ENCODE measurements at regions of chr2 and their contacts with region 1.

Region 1: DNA sequence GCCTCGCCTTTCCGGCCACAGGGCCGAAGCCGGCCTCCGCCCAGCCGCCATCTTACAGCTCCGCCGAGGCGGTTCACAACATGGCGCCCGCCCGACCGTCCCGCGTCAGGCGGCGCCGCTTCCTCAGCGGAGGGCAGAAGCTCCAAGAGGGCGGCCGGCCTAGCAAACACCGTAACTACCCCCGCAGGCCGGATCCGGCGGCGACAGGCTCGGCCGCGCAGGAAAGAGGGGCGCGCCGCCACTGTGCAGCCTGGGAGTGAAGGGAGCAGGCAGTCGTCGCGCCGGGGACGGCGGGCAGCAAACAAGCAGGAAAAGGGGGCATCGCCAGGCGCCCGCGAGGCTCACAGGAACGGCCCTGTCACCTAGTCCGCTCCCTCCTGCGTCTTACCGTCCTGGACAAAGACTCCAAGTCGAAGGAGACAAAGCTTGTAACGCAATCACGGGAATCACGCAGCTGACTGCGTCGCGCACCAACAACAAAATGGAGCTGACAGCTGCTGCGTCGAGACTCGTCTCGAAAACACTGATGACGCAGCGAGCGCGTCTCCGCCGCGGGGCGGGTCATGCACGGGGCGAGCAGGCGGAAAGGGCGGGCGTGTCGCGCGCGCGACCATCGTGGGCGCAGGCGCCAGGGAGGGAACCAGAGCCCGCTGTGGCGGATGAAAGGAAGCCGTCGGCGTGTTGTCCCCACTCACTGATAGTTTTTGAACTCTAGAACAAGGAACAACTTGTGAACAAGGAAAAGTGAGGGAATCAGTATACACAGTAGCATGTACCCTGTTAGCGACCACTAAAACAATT is at the start of gene CLK1:
- DNase-seq: peak; percentile 89
- ATAC-seq: peak; percentile 80
- H3K4me3 ChIP-seq: peak within 1 kb of the TSS; percentile 91 to 99 (median 97)
- H3K27ac ChIP-seq: peak within 1 kb of the TSS; percentile 98
- H3K4me1 ChIP-seq: peaks cover 55% of the 10 kb centered on the region
- H3K27me3 ChIP-seq: no peaks in the 10 kb centered on the region; a peak in 1 of 5 replicates
- CTCF ChIP-seq: no peak; the same call in 1 of the 2 replicates
- EP300 ChIP-seq: peak; percentile 27 to 54; a peak in 2 of 4 replicates
- POLR2A ChIP-seq: peak; percentile 99 to 100
- RAD21 ChIP-seq: peak; percentile 54
- total RNA-seq, gene CLK1: 35.2 and 66.6 TPM in 2 replicates

Region 2: GRCh38 chr2:200635251-200635650 is 229.1 kb before region 1 on chr2:
- CTCF ChIA-PET with region 1: no interaction called
- POLR2A ChIA-PET with region 1: no interaction called
- in situ Hi-C with region 1: no loop called
- intact Hi-C with region 1: no loop called
- DNase-seq: no peak
- ATAC-seq: no peak
- H3K4me3 ChIP-seq: no peak overlapping the region
- H3K27ac ChIP-seq: no peak overlapping the region
- H3K4me1 ChIP-seq: no peaks in the 10 kb centered on the region
- H3K27me3 ChIP-seq: no peaks in the 10 kb centered on the region
- CTCF ChIP-seq: no peak
- EP300 ChIP-seq: no peak
- POLR2A ChIP-seq: no peak
- RAD21 ChIP-seq: no peak

Region 3: DNA sequence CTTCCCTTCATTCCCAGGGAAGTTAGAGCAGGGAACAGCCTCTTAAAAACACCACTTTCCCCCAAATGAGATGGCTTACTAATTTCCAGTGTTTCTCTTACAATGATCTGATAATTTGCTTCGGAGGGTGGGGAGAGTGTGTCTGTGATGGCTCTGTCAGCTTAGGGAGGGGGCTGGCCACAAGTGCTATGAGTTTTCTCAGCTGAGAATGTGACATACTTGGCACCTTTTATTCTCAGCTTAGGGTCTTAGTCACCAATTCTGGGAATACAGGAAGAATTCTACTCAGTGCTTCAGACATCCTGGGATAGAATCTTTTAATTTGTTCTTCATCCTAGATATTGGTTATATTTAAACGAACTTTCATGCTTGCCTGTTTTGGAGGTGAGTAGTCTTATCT is 214.2 kb before region 1 on chr2:
- CTCF ChIA-PET with region 1: no interaction called
- POLR2A ChIA-PET with region 1: interaction called, 10 read pairs
- in situ Hi-C with region 1: no loop called
- intact Hi-C with region 1: no loop called
- DNase-seq: no peak
- ATAC-seq: no peak
- H3K4me3 ChIP-seq: no peak overlapping the region
- H3K27ac ChIP-seq: no peak overlapping the region
- H3K4me1 ChIP-seq: peaks cover 30% of the 10 kb centered on the region
- H3K27me3 ChIP-seq: no peaks in the 10 kb centered on the region
- CTCF ChIP-seq: no peak
- EP300 ChIP-seq: no peak
- POLR2A ChIP-seq: no peak
- RAD21 ChIP-seq: no peak

Region 4: DNA sequence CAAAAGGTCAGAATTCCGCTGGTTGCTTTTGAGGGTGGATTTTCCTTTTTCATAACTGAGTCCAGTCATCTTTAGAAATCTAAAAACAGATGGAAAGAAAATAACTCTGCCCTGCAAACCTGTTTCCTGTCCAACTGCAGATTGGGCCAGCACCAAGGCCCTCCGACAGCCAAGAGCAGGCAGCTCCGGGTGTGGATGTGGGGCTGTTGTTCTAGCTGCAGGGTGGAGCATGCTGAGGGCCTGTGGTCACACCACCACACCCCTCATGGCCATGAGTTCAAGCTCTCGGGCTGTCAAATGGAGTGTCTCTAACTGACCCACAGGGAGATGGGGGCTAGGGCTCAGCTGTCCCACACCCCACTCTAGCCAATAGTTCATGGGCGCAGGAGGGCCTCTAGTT is 122.0 kb before region 1 on chr2:
- CTCF ChIA-PET with region 1: interaction called, 4 read pairs
- POLR2A ChIA-PET with region 1: interaction called, 19 read pairs
- in situ Hi-C with region 1: no loop called
- intact Hi-C with region 1: no loop called
- DNase-seq: no peak
- ATAC-seq: peak; percentile 6; the same call in 1 of the 3 replicates
- H3K4me3 ChIP-seq: no peak overlapping the region
- H3K27ac ChIP-seq: peak overlapping the region; percentile 69
- H3K4me1 ChIP-seq: peaks cover 49% of the 10 kb centered on the region
- H3K27me3 ChIP-seq: peaks cover 0 to 16% of the 10 kb centered on the region in 2 experiments; a peak in 2 of 5 replicates
- CTCF ChIP-seq: no peak
- EP300 ChIP-seq: no peak
- POLR2A ChIP-seq: no peak
- RAD21 ChIP-seq: no peak

Region 5: GRCh38 chr2:200756618-200757321 is 107.6 kb before region 1 on chr2:
- CTCF ChIA-PET with region 1: no interaction called
- POLR2A ChIA-PET with region 1: interaction called, 25 read pairs
- in situ Hi-C with region 1: no loop called
- intact Hi-C with region 1: loop called (anchors 1 kb)
- DNase-seq: peak; percentile 95
- ATAC-seq: peak; percentile 93
- H3K4me3 ChIP-seq: peak overlapping the region; percentile 5 to 59 (median 11); a peak in 5 of 6 replicates
- H3K27ac ChIP-seq: peak overlapping the region; percentile 64
- H3K4me1 ChIP-seq: peaks cover 79% of the 10 kb centered on the region
- H3K27me3 ChIP-seq: no peaks in the 10 kb centered on the region; a peak in 2 of 5 replicates
- CTCF ChIP-seq: no peak
- EP300 ChIP-seq: peak; percentile 33 to 91; a peak in 2 of 4 replicates
- POLR2A ChIP-seq: peak; percentile 37 to 50; a peak in 2 of 4 replicates
- RAD21 ChIP-seq: peak; percentile 22; the same call in 1 of the 2 replicates

Region 6: DNA sequence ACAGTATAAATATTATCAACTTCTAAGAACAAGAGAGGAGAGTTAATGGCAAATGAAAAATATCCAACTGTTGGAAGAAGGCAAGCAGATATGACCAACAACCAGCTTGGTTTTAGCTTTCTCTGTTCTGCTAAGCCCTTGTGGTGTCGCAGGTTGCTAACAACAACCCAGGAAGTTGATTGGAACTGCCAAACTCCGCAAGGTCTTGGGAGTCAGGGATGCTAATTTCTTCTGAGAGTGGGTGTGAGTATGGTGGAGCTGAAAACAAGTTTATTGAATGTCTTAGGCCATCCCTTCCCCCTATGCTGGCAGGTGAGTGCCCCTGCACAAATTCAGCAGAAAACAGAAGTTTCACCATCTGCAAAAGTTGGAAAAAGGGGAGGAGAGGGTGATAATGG is 35.1 kb before region 1 on chr2:
- CTCF ChIA-PET with region 1: no interaction called
- POLR2A ChIA-PET with region 1: interaction called, 14 read pairs
- in situ Hi-C with region 1: loop called (anchors 5 kb)
- intact Hi-C with region 1: loop called (anchors 5 kb)
- DNase-seq: no peak
- ATAC-seq: peak; percentile 8
- H3K4me3 ChIP-seq: no peak overlapping the region
- H3K27ac ChIP-seq: no peak overlapping the region
- H3K4me1 ChIP-seq: no peaks in the 10 kb centered on the region
- H3K27me3 ChIP-seq: no peaks in the 10 kb centered on the region
- CTCF ChIP-seq: no peak
- EP300 ChIP-seq: no peak
- POLR2A ChIP-seq: no peak
- RAD21 ChIP-seq: no peak

Region 7: GRCh38 chr2:200877443-200877842 is 13.1 kb after region 1 on chr2:
- CTCF ChIA-PET with region 1: no interaction called
- POLR2A ChIA-PET with region 1: interaction called, 12 read pairs
- in situ Hi-C with region 1: no loop called
- intact Hi-C with region 1: no loop called
- DNase-seq: no peak
- ATAC-seq: no peak
- H3K4me3 ChIP-seq: no peak overlapping the region
- H3K27ac ChIP-seq: peak overlapping the region; percentile 26
- H3K4me1 ChIP-seq: peaks cover 27% of the 10 kb centered on the region
- H3K27me3 ChIP-seq: no peaks in the 10 kb centered on the region; a peak in 1 of 5 replicates
- CTCF ChIP-seq: no peak
- EP300 ChIP-seq: no peak
- POLR2A ChIP-seq: no peak
- RAD21 ChIP-seq: no peak

Region 8: GRCh38 chr2:201118121-201118960 is 254.0 kb after region 1 on chr2:
- CTCF ChIA-PET with region 1: no interaction called
- POLR2A ChIA-PET with region 1: interaction called, 12 read pairs
- in situ Hi-C with region 1: no loop called
- intact Hi-C with region 1: no loop called
- DNase-seq: peak; percentile 88
- ATAC-seq: peak; percentile 47
- H3K4me3 ChIP-seq: peak overlapping the region; percentile 86 to 90 (median 86)
- H3K27ac ChIP-seq: peak overlapping the region; percentile 91
- H3K4me1 ChIP-seq: peaks cover 68% of the 10 kb centered on the region
- H3K27me3 ChIP-seq: no peaks in the 10 kb centered on the region; a peak in 2 of 5 replicates
- CTCF ChIP-seq: peak; percentile 78
- EP300 ChIP-seq: no peak; a peak in 1 of 4 replicates
- POLR2A ChIP-seq: peak; percentile 61 to 68
- RAD21 ChIP-seq: peak; percentile 68

Region 9: DNA sequence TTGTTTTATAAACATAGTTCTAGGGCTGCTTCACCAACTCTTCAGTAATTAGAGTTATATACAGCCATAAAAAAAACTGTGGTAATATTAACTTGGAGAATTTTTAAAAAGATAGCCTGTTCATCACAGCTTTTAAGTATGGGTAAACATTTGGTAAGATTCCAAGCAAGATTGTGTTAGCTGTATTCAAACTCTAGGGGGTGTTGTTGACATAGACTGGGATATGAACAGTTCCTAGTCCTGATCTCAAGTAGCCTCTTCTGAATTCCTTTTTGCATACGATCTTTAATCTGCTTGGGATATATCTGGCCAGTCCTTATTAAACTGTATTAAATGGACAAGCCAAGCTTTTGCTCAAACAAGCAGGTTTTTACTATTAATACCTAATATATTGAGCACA is 1414.6 kb after region 1 on chr2:
- CTCF ChIA-PET with region 1: no interaction called
- POLR2A ChIA-PET with region 1: no interaction called
- in situ Hi-C with region 1: no loop called
- intact Hi-C with region 1: no loop called
- DNase-seq: peak; percentile 48
- ATAC-seq: peak; percentile 65
- H3K4me3 ChIP-seq: no peak overlapping the region
- H3K27ac ChIP-seq: no peak overlapping the region
- H3K4me1 ChIP-seq: peaks cover 43% of the 10 kb centered on the region
- H3K27me3 ChIP-seq: no peaks in the 10 kb centered on the region
- CTCF ChIP-seq: peak; percentile 65
- EP300 ChIP-seq: no peak
- POLR2A ChIP-seq: 0 out of 4 replicates have a peak, but pooled peaks of 1 of the 2 experiments have one; percentile 12
- RAD21 ChIP-seq: no peak